ENCODE measurements at regions of chr1 and their contacts with region 1.

Region 1: GRCh38 chr1:239987103-239987745 is 104.5 kb upstream of the FMN2 start:
- DNase-seq: peak; percentile 47
- H3K4me3 Mint-ChIP-seq: no peak overlapping the region
- H3K27ac Mint-ChIP-seq: no peak overlapping the region
- H3K4me1 Mint-ChIP-seq: no peaks in the 10 kb centered on the region
- H3K27me3 Mint-ChIP-seq: no peaks in the 10 kb centered on the region

Region 2: DNA sequence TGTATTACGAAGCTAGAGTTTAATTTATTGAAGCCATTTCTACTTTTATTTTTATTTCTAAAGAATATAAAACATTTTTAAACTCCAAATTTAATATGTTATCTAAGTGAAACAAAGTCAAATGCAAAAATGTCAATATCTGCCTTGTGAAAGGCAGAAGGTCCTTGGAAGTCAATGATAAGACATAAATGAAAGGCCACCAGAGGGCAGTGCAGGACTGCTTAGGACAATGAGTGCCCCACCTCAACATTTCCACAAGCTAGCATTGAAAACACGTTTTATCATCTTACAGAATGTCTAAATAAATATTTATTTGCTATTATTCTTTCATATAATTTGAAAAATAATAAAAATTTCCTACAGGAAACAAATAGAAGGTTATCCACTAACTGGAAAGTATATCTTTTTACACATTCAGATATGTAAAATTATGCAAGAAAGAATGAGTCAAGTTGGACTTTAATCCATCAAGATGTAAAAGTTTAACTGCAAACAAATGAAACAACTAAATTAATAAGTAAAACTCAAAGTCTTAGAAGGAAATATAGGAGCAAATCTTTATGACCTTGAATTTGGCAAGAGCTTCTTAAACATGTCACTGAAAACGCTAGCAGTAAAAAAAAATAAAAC is 35.6 kb before region 1 on chr1:
- CTCF ChIA-PET with region 1: interaction called, 11 read pairs
- DNase-seq: peak; percentile 67
- H3K4me3 Mint-ChIP-seq: no peak overlapping the region
- H3K27ac Mint-ChIP-seq: no peak overlapping the region
- H3K4me1 Mint-ChIP-seq: no peaks in the 10 kb centered on the region
- H3K27me3 Mint-ChIP-seq: peaks cover 5% of the 10 kb centered on the region